Activated CD4-positive, alpha-beta memory T cell treated with anti-CD3 and anti-CD28 coated beads for 36 hours (primary cell): ENCODE measurements at regions of chr1 and their contacts with region 1.

Region 1: DNA sequence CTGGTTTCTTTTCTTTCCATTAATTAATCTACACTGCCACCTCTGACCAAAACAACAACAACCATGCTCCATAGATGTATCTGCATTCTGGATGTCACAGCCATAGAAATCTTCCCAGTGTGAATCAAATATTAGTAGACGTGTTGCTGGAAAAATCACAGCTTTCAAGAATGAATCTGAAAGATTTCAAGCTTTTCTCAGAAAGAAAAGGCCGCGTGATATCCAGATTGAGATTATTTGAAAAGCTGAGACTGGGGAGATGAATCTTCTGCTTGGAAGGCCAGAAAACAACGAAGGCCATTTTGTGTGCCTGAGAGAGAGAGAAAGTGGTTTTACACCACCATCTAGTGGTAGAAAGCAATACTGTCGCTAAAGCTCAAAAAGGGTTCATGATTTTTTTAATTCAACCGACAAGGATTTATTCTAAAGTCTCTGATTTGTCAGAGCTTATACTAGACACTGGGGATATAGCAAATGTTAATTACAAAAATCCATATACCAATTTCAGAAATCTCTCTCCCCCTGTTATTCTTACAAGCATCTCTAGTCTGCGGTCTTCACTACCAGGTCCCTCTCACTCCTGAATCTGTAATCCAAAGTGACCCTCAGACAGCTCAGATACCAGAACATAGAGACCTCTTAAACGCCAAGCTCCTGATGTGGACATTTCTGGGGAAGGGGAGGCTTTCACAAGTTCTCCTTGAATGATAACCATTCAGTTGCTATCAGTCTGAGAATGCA is 87.5 kb upstream of the SGIP1 start:
- DNase-seq: peak; percentile 23
- H3K4me3 Mint-ChIP-seq: peak overlapping the region; percentile 6
- H3K27ac Mint-ChIP-seq: peak overlapping the region; percentile 86
- H3K4me1 Mint-ChIP-seq: peaks cover 21% of the 10 kb centered on the region
- H3K27me3 Mint-ChIP-seq: peaks cover 4% of the 10 kb centered on the region

Region 2: GRCh38 chr1:66253330-66253921 is 193.0 kb before region 1 on chr1:
- CTCF ChIA-PET with region 1: interaction called, 476 read pairs
- POLR2A ChIA-PET with region 1: interaction called, 9 read pairs
- intact Hi-C with region 1: loop called (anchors 1 kb)
- DNase-seq: no peak
- H3K4me3 Mint-ChIP-seq: no peak overlapping the region
- H3K27ac Mint-ChIP-seq: no peak overlapping the region
- H3K4me1 Mint-ChIP-seq: peaks cover 51% of the 10 kb centered on the region
- H3K27me3 Mint-ChIP-seq: no peaks in the 10 kb centered on the region

Region 3: GRCh38 chr1:66282343-66282852 is 164.0 kb before region 1 on chr1:
- CTCF ChIA-PET with region 1: interaction called, 26 read pairs
- POLR2A ChIA-PET with region 1: no interaction called
- intact Hi-C with region 1: loop called (anchors 1 kb)
- DNase-seq: peak; percentile 80
- H3K4me3 Mint-ChIP-seq: no peak overlapping the region
- H3K27ac Mint-ChIP-seq: peak overlapping the region; percentile 76
- H3K4me1 Mint-ChIP-seq: peaks cover 87% of the 10 kb centered on the region
- H3K27me3 Mint-ChIP-seq: no peaks in the 10 kb centered on the region

Region 4: GRCh38 chr1:66316464-66317247 is 129.8 kb before region 1 on chr1:
- CTCF ChIA-PET with region 1: no interaction called
- POLR2A ChIA-PET with region 1: no interaction called
- intact Hi-C with region 1: no loop called
- DNase-seq: no peak
- H3K4me3 Mint-ChIP-seq: no peak overlapping the region
- H3K27ac Mint-ChIP-seq: peak overlapping the region; percentile 13
- H3K4me1 Mint-ChIP-seq: no peaks in the 10 kb centered on the region
- H3K27me3 Mint-ChIP-seq: no peaks in the 10 kb centered on the region

Region 5: DNA sequence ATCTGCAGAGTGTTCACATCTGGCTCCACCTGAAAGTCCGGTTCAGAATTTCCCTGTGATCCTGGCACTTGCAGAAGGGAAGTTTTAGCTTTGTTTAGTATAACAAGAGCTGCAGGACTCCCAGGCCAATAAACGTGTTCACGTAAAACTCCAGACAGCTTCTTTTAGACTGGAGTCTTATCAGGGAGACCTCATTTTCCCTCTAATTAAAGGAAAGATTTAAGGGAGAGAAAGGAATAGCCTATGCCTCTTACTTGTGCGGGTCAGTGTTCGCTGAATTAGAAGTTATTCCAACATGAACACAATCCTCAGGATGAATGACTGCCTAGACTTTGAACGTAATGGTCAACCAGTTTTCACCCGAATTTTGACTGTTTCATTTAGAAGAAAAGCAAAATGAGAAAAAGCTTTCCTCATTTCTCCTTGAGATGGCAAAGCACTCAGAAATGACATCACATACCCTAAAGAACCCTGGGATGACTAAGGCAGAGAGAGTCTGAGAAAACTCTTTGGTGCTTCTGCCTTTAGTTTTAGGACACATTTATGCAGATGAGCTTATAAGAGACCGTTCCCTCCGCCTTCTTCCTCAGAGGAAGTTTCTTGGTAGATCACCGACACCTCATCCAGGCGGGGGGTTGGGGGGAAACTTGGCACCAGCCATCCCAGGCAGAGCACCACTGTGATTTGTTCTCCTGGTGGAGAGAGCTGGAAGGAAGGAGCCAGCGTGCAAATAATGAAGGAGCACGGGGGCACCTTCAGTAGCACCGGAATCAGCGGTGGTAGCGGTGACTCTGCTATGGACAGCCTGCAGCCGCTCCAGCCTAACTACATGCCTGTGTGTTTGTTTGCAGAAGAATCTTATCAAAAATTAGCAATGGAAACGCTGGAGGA is 114.5 kb before region 1 on chr1:
- CTCF ChIA-PET with region 1: interaction called, 42 read pairs
- POLR2A ChIA-PET with region 1: interaction called, 3 read pairs
- intact Hi-C with region 1: loop called (anchors 1 kb)
- DNase-seq: peak; percentile 75
- H3K4me3 Mint-ChIP-seq: peak overlapping the region; percentile 93
- H3K27ac Mint-ChIP-seq: peak overlapping the region; percentile 96
- H3K4me1 Mint-ChIP-seq: peaks cover 48% of the 10 kb centered on the region
- H3K27me3 Mint-ChIP-seq: no peaks in the 10 kb centered on the region

Region 6: DNA sequence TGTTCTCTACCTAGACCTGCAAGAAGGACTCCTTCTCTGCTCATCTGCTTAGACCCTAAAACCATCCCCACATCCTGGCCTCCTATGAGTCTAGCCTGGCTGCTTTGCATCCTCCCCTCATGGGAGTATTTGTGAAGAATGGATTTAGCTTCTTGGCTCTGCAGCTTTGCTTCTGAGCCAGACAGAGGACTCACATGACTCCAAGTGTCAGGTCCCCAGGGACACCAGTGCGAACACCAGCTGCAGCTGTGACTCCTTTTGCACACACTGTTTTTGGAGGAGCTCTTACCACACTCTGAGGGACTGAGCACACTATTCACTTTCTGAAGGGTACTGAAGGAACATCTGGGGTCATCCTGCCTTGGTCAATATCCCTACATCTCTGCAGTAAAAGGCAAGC is 44.2 kb before region 1 on chr1:
- CTCF ChIA-PET with region 1: interaction called, 11 read pairs
- POLR2A ChIA-PET with region 1: no interaction called
- intact Hi-C with region 1: no loop called
- DNase-seq: no peak
- H3K4me3 Mint-ChIP-seq: no peak overlapping the region
- H3K27ac Mint-ChIP-seq: no peak overlapping the region
- H3K4me1 Mint-ChIP-seq: peaks cover 31% of the 10 kb centered on the region
- H3K27me3 Mint-ChIP-seq: no peaks in the 10 kb centered on the region

Region 7: DNA sequence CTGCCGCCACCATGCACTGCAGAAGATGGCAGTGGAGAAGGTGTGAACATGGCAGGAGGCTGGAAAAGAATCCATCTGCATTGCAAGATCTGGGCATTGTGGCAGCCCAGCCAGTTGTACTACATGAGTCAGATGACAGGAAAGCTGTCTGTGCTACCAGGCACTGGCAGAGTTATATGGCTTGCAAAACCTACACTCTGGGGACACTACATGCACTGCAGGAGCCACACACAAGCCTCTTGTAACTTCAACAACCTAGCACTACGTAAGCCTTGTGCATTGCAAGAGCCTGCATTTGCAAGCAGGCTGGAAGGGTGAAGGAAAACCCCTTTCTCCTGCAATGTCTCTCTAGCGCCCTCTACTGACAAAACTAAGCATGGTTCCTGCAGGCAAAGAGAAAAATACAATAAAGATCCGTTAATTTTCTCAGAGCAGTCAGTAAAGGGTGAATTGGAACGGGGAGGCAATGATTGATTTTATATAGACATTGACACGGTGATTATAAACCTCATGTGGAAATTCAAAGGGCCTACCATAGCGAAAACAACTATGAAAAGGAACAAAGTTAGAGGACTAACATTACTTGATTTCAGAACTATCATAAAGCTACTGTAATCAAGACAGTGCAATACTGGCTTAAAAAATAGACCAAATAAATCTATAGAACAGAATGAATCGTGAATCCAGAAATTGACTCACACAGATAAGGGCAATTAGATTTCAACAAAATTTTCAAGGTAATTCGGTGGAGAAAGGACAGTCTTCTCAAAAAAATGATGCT is 279.6 kb after region 1 on chr1:
- CTCF ChIA-PET with region 1: interaction called, 5 read pairs
- POLR2A ChIA-PET with region 1: no interaction called
- intact Hi-C with region 1: loop called (anchors 5 kb)
- DNase-seq: peak; percentile 61
- H3K4me3 Mint-ChIP-seq: no peak overlapping the region
- H3K27ac Mint-ChIP-seq: no peak overlapping the region
- H3K4me1 Mint-ChIP-seq: peaks cover 10% of the 10 kb centered on the region
- H3K27me3 Mint-ChIP-seq: peaks cover 8% of the 10 kb centered on the region